ENCODE measurements at regions of chr22 and their contacts with region 1.

Region 1: DNA sequence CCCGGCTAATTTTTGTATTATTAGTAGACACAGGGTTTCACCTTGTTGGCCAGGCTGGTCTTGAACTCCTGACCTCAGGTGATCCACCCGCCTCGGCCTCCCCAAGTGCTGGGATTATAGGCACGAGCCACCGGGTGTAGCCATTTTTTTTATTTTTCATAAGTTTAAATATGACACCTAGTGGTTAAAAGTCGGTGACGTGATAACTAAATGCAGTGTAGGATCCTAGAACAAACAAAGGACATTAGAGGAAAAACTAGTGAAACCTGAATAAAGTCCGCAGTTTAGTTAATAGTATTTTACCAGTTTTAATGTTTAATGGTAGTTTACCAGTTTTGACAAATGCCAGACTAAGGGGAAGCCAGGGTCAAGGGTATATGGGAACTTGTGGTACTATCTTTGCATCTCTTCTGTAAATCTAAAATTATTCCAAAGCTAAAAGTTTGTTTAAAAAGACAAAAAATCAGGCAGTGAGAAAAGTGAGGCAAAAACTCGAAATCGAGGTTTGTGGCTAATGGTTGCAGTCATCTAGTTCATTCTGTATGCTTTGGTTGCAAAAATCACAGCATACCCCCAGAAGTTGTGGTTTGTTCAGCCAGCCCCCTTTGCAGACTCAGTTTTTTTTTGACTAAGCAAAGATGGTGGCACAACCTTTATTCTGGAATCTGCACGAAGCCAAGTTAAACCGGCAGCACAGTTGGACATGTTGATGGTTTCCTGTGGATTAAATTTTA is 29.6 kb downstream of the TOM1 start:
- DNase-seq: no peak
- ATAC-seq: no peak
- H3K4me3 ChIP-seq: no peak overlapping the region
- H3K27ac ChIP-seq: peak overlapping the region; percentile 92
- H3K4me1 ChIP-seq: peaks cover 53% of the 10 kb centered on the region
- H3K27me3 ChIP-seq: no peaks in the 10 kb centered on the region
- CTCF ChIP-seq: 0 out of 2 replicates have a peak, but pooled peaks have one; percentile 16
- EP300 ChIP-seq: no peak
- POLR2A ChIP-seq: no peak
- RAD21 ChIP-seq: no peak

Region 2: DNA sequence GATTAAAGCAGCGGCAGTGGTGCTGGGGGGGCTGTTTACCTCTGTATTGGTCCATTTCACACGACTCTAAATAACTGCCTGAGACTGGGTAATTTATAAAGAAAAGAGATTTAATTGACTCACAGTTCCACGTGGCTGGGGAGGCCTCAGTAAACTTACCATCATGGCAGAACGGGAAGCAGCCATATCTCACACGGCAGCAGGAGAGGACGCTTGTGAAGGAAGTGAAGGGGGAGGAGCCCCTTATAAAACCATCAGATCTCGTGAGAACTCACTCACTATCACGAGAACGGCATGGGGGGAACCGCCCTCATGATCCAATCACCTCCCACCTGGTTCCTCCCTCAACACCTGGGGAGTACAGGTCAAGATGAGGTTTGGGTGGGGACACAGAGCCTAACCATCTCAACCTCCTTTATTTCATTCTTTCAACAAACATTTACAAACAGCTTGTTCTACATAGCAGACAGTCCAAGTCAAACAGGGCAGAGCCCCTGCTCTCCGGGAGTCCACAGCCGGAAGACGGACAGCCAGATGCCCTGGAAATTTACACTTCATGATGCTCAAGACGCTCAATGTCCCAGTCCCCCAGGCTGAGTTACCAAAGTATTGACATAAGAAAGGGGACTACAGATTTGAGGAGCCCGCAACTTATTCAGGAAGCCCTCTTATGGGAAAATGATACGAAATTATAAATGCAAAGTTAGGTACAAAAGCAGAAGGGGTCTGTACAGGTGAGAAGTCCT is 98.3 kb before region 1 on chr22:
- CTCF ChIA-PET with region 1: no interaction called
- POLR2A ChIA-PET with region 1: no interaction called
- in situ Hi-C with region 1: no loop called
- intact Hi-C with region 1: no loop called
- DNase-seq: peak; percentile 51
- ATAC-seq: peak; percentile 82
- H3K4me3 ChIP-seq: peak overlapping the region; percentile 48 to 57 (median 57)
- H3K27ac ChIP-seq: no peak overlapping the region
- H3K4me1 ChIP-seq: peaks cover 31% of the 10 kb centered on the region
- H3K27me3 ChIP-seq: no peaks in the 10 kb centered on the region
- CTCF ChIP-seq: no peak
- EP300 ChIP-seq: no peak
- POLR2A ChIP-seq: peak; percentile 81 to 82
- RAD21 ChIP-seq: no peak

Region 3: GRCh38 chr22:35257321-35258190 is 71.7 kb before region 1 on chr22 and contains the start of gene HMGXB4:
- CTCF ChIA-PET with region 1: no interaction called
- POLR2A ChIA-PET with region 1: interaction called, 3 read pairs
- in situ Hi-C with region 1: no loop called
- intact Hi-C with region 1: loop called (anchors 5 kb)
- DNase-seq: peak; percentile 76
- ATAC-seq: peak; percentile 95
- H3K4me3 ChIP-seq: peak within 1 kb of the TSS; percentile 75 to 89 (median 76)
- H3K27ac ChIP-seq: peak within 1 kb of the TSS; percentile 89
- H3K4me1 ChIP-seq: peaks cover 26% of the 10 kb centered on the region
- H3K27me3 ChIP-seq: no peaks in the 10 kb centered on the region; a peak in 1 of 5 replicates
- CTCF ChIP-seq: peak; percentile 45
- EP300 ChIP-seq: no peak
- POLR2A ChIP-seq: peak; percentile 54 to 58; a peak in 3 of 4 replicates
- RAD21 ChIP-seq: no peak
- total RNA-seq, gene HMGXB4: 13.9 and 14.4 TPM in 2 replicates

Region 4: GRCh38 chr22:35313311-35314121 is 15.8 kb before region 1 on chr22:
- CTCF ChIA-PET with region 1: no interaction called
- POLR2A ChIA-PET with region 1: interaction called, 15 read pairs
- in situ Hi-C with region 1: no loop called
- intact Hi-C with region 1: loop called (anchors 1 kb)
- DNase-seq: peak; percentile 70
- ATAC-seq: peak; percentile 13; the same call in 1 of the 3 replicates
- H3K4me3 ChIP-seq: no peak overlapping the region
- H3K27ac ChIP-seq: peak overlapping the region; percentile 82
- H3K4me1 ChIP-seq: peaks cover 47% of the 10 kb centered on the region
- H3K27me3 ChIP-seq: no peaks in the 10 kb centered on the region
- CTCF ChIP-seq: no peak
- EP300 ChIP-seq: no peak
- POLR2A ChIP-seq: peak in 1 of 2 experiments; percentile 15; a peak in 1 of 4 replicates
- RAD21 ChIP-seq: no peak

Region 5: GRCh38 chr22:35367301-35367886 is 38.1 kb after region 1 on chr22:
- CTCF ChIA-PET with region 1: no interaction called
- POLR2A ChIA-PET with region 1: no interaction called
- in situ Hi-C with region 1: no loop called
- intact Hi-C with region 1: no loop called
- DNase-seq: no peak
- ATAC-seq: no peak
- H3K4me3 ChIP-seq: no peak overlapping the region
- H3K27ac ChIP-seq: no peak overlapping the region
- H3K4me1 ChIP-seq: peaks cover 93% of the 10 kb centered on the region
- H3K27me3 ChIP-seq: no peaks in the 10 kb centered on the region
- CTCF ChIP-seq: 0 out of 2 replicates have a peak, but pooled peaks have one; percentile 3
- EP300 ChIP-seq: no peak
- POLR2A ChIP-seq: no peak
- RAD21 ChIP-seq: no peak

Region 6: GRCh38 chr22:35524966-35525686 is 195.8 kb after region 1 on chr22:
- CTCF ChIA-PET with region 1: no interaction called
- POLR2A ChIA-PET with region 1: no interaction called
- in situ Hi-C with region 1: no loop called
- intact Hi-C with region 1: no loop called
- DNase-seq: no peak
- ATAC-seq: no peak
- H3K4me3 ChIP-seq: no peak overlapping the region
- H3K27ac ChIP-seq: no peak overlapping the region
- H3K4me1 ChIP-seq: no peaks in the 10 kb centered on the region
- H3K27me3 ChIP-seq: peaks cover 0 to 36% of the 10 kb centered on the region in 2 experiments; a peak in 3 of 5 replicates
- CTCF ChIP-seq: no peak
- EP300 ChIP-seq: no peak
- POLR2A ChIP-seq: no peak
- RAD21 ChIP-seq: no peak